Transverse colon (tissue), 4 donors: ENCODE measurements at regions of chr18 and their contacts with region 1.

Region 1: DNA sequence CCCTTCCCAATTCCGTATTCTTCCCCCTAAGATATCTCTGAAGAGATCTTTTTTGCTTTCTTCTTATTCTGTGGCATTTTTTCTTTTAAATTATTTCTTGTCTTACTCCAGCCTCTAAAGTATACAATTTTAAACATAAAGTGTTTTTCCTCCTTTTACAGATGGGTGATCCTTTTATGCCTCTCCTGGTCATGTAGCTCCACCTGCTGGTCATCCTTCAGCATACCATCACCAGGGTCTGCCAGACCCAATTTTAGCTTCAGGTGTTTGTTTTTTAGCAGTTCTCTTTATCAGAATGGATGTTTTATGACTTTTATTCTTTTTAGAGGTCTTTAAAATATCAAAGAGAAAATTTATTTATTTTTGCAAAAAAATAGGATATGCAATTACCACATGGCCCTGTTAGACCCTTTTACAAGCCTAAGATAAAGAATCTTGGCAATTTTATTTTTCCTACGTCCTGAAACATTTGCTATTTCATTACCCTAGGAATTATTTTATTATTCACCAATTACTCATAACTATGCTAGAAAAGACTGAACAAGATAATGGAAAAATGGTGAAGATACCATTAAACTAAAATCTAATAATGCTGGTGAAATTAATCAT is 55.5 kb downstream of the PIGN start:
- DNase-seq: peak; percentile 52
- H3K4me3 ChIP-seq: no peak overlapping the region
- H3K27ac ChIP-seq: no peak overlapping the region
- H3K4me1 ChIP-seq: no peaks in the 10 kb centered on the region
- H3K27me3 ChIP-seq: no peaks in the 10 kb centered on the region
- CTCF ChIP-seq: peak; percentile 87 to 94 (median 90)
- EP300 ChIP-seq: no peak
- POLR2A ChIP-seq: no peak

Region 2: GRCh38 chr18:61551586-61551985 is 579.8 kb before region 1 on chr18:
- in situ Hi-C with region 1: loop called in 1 of 4 experiments (anchors 10 kb)
- intact Hi-C with region 1: no loop called
- DNase-seq: peak; percentile 20
- H3K4me3 ChIP-seq: no peak overlapping the region
- H3K27ac ChIP-seq: no peak overlapping the region
- H3K4me1 ChIP-seq: no peaks in the 10 kb centered on the region
- H3K27me3 ChIP-seq: no peaks in the 10 kb centered on the region
- CTCF ChIP-seq: peak; percentile 72 to 88 (median 80)
- EP300 ChIP-seq: no peak
- POLR2A ChIP-seq: no peak

Region 3: DNA sequence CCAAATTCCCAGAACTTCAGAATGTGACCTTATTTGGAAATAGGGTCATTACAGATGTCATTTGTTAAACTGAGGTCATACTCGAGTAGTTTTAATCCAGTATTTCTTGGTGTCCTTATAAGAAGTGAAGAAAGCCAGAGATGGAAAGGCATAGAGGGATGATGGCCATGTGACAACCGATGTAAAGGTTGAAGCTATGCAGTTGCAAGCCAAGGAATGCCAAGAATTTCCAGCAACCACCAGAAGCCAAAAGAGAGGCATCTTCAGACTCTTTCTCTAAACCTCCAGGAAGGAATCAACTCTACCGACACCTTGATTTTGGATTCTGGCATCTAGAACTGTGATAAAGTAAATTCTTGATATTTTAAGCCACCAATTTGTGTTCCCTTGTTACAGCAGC is 556.0 kb before region 1 on chr18:
- in situ Hi-C with region 1: loop called in 3 of 4 experiments (anchors 10 to 25 kb)
- intact Hi-C with region 1: no loop called
- DNase-seq: no peak
- H3K4me3 ChIP-seq: no peak overlapping the region
- H3K27ac ChIP-seq: no peak overlapping the region
- H3K4me1 ChIP-seq: no peaks in the 10 kb centered on the region
- H3K27me3 ChIP-seq: peaks cover 3% of the 10 kb centered on the region
- CTCF ChIP-seq: no peak
- EP300 ChIP-seq: no peak
- POLR2A ChIP-seq: no peak

Region 4: GRCh38 chr18:61581578-61582201 is 549.7 kb before region 1 on chr18:
- in situ Hi-C with region 1: loop called in 3 of 4 experiments (anchors 10 to 25 kb)
- intact Hi-C with region 1: no loop called
- DNase-seq: peak; percentile 79
- H3K4me3 ChIP-seq: peak overlapping the region in 3 of 4 donors; percentile 32 to 52 (median 36)
- H3K27ac ChIP-seq: peak overlapping the region; percentile 31 to 71 (median 54)
- H3K4me1 ChIP-seq: peaks cover 0 to 21% (median 12%) of the 10 kb centered on the region in 4 donors
- H3K27me3 ChIP-seq: peaks cover 3% of the 10 kb centered on the region
- CTCF ChIP-seq: peak; percentile 92 to 99 (median 99)
- EP300 ChIP-seq: no peak
- POLR2A ChIP-seq: no peak

Region 5: GRCh38 chr18:61901323-61901986 is 229.9 kb before region 1 on chr18:
- in situ Hi-C with region 1: loop called in 1 of 4 experiments (anchors 25 kb)
- intact Hi-C with region 1: no loop called
- DNase-seq: peak; percentile 55
- H3K4me3 ChIP-seq: no peak overlapping the region
- H3K27ac ChIP-seq: no peak overlapping the region
- H3K4me1 ChIP-seq: peaks cover 0 to 8% (median 0%) of the 10 kb centered on the region in 4 donors
- H3K27me3 ChIP-seq: no peaks in the 10 kb centered on the region
- CTCF ChIP-seq: peak; percentile 85 to 93 (median 90)
- EP300 ChIP-seq: no peak
- POLR2A ChIP-seq: no peak